ENCODE measurements at regions of chr5 and their contacts with region 1.

Region 1: GRCh38 chr5:6712577-6713275 is 506 bp upstream of the TENT4A start:
- DNase-seq: peak; percentile 96
- H3K4me3 Mint-ChIP-seq: peak overlapping the region; percentile 83
- H3K27ac Mint-ChIP-seq: peak overlapping the region; percentile 92
- H3K4me1 Mint-ChIP-seq: peaks cover 31% of the 10 kb centered on the region
- H3K27me3 Mint-ChIP-seq: peaks cover 5% of the 10 kb centered on the region

Region 2: DNA sequence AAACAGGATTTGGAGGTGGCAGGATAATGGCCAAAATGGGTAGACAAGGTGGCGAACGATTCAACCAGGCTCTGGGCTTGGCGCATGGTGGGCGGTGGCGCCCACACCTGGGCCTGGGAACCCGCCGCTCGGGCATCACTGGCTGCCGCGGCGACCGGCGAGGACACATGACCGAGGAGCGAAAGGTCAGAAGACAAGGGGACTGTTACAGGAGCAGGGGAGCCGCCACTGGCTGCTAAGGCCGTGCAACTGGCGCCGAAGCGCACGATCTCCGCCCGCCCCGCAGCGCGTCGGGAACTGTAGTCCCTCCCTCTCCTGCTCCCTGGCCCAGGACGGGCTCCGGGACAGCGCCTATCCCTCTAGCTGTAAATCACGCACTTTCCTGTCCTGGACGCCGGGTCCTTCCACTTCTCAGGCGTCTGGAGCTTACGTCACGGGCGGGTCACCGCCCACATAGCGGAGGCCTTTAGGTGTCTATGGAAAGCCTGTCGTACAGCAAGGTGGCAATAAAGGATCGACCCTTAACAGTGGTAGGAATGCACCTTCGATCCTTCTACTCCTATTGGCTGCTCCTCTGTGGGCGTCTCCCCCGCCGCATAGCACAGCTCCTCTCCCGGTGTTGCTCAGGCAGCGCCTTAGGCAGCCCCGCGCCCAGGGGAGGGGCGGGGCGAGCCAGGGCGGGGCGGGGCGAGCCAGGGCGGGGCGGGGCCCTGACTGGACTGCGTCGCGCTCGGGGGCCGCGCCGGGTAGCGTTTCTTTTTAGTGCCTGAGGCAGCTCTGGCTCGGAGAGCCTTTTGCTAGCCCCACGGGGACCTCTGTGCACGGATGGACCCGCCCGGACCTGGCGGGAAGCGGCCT is 1290.5 kb before region 1 on chr5 and contains the start of gene ICE1:
- CTCF ChIA-PET with region 1: no interaction called
- intact Hi-C with region 1: loop called (anchors 1 kb)
- DNase-seq: peak; percentile 95
- H3K4me3 Mint-ChIP-seq: peak within 1 kb of the TSS; percentile 95
- H3K27ac Mint-ChIP-seq: peak within 1 kb of the TSS; percentile 91
- H3K4me1 Mint-ChIP-seq: peaks cover 19% of the 10 kb centered on the region
- H3K27me3 Mint-ChIP-seq: no peaks in the 10 kb centered on the region
- total RNA-seq, gene ICE1: 19.1 to 20.6 TPM

Region 3: GRCh38 chr5:6632917-6633468 is 79.7 kb before region 1 on chr5 and contains the starts of genes NSUN2 and SRD5A1:
- CTCF ChIA-PET with region 1: no interaction called
- intact Hi-C with region 1: loop called (anchors 1 kb)
- DNase-seq: peak; percentile 88
- H3K4me3 Mint-ChIP-seq: peak within 1 kb of the TSS; percentile 93
- H3K27ac Mint-ChIP-seq: peak within 1 kb of the TSS; percentile 98
- H3K4me1 Mint-ChIP-seq: peaks cover 35% of the 10 kb centered on the region
- H3K27me3 Mint-ChIP-seq: no peaks in the 10 kb centered on the region
- total RNA-seq, gene NSUN2: 59.0 to 60.5 TPM
- total RNA-seq, gene SRD5A1: 5.2 to 5.4 TPM

Region 4: GRCh38 chr5:6728011-6728794 is 15.5 kb after region 1 on chr5:
- CTCF ChIA-PET with region 1: no interaction called
- intact Hi-C with region 1: loop called (anchors 1 kb)
- DNase-seq: no peak
- H3K4me3 Mint-ChIP-seq: no peak overlapping the region
- H3K27ac Mint-ChIP-seq: no peak overlapping the region
- H3K4me1 Mint-ChIP-seq: peaks cover 87% of the 10 kb centered on the region
- H3K27me3 Mint-ChIP-seq: no peaks in the 10 kb centered on the region

Region 5: DNA sequence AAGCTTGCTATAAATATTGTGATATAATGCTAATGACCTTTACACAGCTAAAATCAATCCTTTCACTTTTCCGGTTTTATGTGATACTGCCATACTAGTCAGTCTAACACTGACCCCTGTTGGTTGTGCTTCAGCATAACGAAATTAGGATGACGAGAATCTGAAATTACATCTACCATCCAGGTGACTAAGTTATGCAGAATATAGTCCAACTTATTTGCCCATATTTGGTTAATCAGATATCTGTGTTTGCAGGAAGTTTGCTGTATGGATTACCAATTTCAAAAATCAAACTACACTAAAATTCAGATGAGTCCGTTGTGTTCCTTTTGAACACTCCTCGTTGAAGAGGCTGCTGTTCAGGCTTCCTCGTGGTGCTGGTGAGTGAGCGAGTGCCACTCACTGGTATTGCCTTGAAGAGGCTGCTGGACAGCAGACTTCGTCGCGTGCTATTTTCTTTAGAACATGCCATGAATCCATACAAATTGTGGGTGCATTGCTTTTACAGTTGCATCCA is 33.0 kb after region 1 on chr5:
- CTCF ChIA-PET with region 1: interaction called, 4 read pairs
- intact Hi-C with region 1: loop called (anchors 1 kb)
- DNase-seq: peak; percentile 35
- H3K4me3 Mint-ChIP-seq: no peak overlapping the region
- H3K27ac Mint-ChIP-seq: no peak overlapping the region
- H3K4me1 Mint-ChIP-seq: peaks cover 7% of the 10 kb centered on the region
- H3K27me3 Mint-ChIP-seq: no peaks in the 10 kb centered on the region

Region 6: GRCh38 chr5:7868773-7869473 is 1156.2 kb after region 1 on chr5 and contains the starts of genes FASTKD3 and MTRR:
- CTCF ChIA-PET with region 1: no interaction called
- intact Hi-C with region 1: loop called (anchors 2 kb)
- DNase-seq: peak; percentile 91
- H3K4me3 Mint-ChIP-seq: peak within 1 kb of the TSS; percentile 96
- H3K27ac Mint-ChIP-seq: peak within 1 kb of the TSS; percentile 82
- H3K4me1 Mint-ChIP-seq: peaks cover 64% of the 10 kb centered on the region
- H3K27me3 Mint-ChIP-seq: no peaks in the 10 kb centered on the region
- total RNA-seq, gene FASTKD3: 4.0 to 7.7 TPM
- total RNA-seq, gene MTRR: 34.0 to 35.1 TPM